ENCODE measurements at regions of chr4 and their contacts with region 1.

Region 1: GRCh38 chr4:109548655-109549054 is 11.4 kb upstream of the MCUB start:
- DNase-seq: peak in 2 of 9 experiments; percentile 22 to 25
- ATAC-seq: peak; percentile 17
- H3K4me3 ChIP-seq: no peak overlapping the region
- H3K4me3 Mint-ChIP-seq: no peak overlapping the region
- H3K27ac ChIP-seq: no peak overlapping the region
- H3K27ac Mint-ChIP-seq: peak overlapping the region; percentile 25
- H3K4me1 ChIP-seq: no peaks in the 10 kb centered on the region
- H3K4me1 Mint-ChIP-seq: peaks cover 20% of the 10 kb centered on the region
- H3K27me3 ChIP-seq: no peaks in the 10 kb centered on the region
- H3K27me3 Mint-ChIP-seq: no peaks in the 10 kb centered on the region
- CTCF ChIP-seq: no peak

Region 2: GRCh38 chr4:109278594-109279031 is 270.0 kb before region 1 on chr4:
- CTCF ChIA-PET with region 1: no interaction called
- POLR2A ChIA-PET with region 1: no interaction called
- intact Hi-C with region 1: no loop called
- DNase-seq: no peak
- ATAC-seq: no peak
- H3K4me3 ChIP-seq: no peak overlapping the region
- H3K4me3 Mint-ChIP-seq: no peak overlapping the region
- H3K27ac ChIP-seq: no peak overlapping the region
- H3K27ac Mint-ChIP-seq: no peak overlapping the region
- H3K4me1 ChIP-seq: no peaks in the 10 kb centered on the region
- H3K4me1 Mint-ChIP-seq: no peaks in the 10 kb centered on the region
- H3K27me3 ChIP-seq: no peaks in the 10 kb centered on the region
- H3K27me3 Mint-ChIP-seq: peaks cover 11% of the 10 kb centered on the region
- CTCF ChIP-seq: no peak

Region 3: DNA sequence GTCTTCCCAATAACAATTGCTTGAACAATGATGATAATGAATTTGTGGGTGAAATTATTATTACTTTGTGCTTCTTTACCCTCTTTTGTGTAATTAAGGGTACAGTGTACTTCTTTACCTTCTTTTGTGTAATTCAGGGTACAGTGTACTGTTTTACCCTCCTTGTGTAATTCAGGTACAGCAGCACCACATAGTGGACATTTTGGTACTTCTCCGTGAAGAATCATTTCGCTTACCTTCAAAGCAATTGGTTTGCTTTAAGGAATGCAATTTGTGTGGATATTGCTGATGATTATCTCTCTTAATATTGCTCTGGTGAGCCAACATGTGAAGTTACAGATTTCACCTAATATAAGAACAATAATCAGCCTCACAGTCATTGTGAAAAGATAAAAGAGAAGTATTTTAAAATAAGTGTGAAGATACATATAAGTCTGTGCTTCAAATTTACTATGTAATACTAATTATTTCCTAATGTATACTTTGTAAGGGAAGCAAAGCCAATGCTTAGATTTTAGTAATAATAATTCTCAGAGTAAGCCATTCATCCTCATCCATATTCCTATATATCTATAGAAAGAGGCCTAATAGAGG is 142.2 kb before region 1 on chr4:
- CTCF ChIA-PET with region 1: no interaction called
- POLR2A ChIA-PET with region 1: no interaction called
- intact Hi-C with region 1: no loop called
- DNase-seq: peak in 4 of 9 experiments; percentile 26 to 73 (median 46)
- ATAC-seq: peak; percentile 57
- H3K4me3 ChIP-seq: no peak overlapping the region
- H3K4me3 Mint-ChIP-seq: no peak overlapping the region
- H3K27ac ChIP-seq: no peak overlapping the region
- H3K27ac Mint-ChIP-seq: no peak overlapping the region
- H3K4me1 ChIP-seq: no peaks in the 10 kb centered on the region
- H3K4me1 Mint-ChIP-seq: no peaks in the 10 kb centered on the region
- H3K27me3 ChIP-seq: no peaks in the 10 kb centered on the region
- H3K27me3 Mint-ChIP-seq: peaks cover 2% of the 10 kb centered on the region
- CTCF ChIP-seq: peak; percentile 72

Region 4: DNA sequence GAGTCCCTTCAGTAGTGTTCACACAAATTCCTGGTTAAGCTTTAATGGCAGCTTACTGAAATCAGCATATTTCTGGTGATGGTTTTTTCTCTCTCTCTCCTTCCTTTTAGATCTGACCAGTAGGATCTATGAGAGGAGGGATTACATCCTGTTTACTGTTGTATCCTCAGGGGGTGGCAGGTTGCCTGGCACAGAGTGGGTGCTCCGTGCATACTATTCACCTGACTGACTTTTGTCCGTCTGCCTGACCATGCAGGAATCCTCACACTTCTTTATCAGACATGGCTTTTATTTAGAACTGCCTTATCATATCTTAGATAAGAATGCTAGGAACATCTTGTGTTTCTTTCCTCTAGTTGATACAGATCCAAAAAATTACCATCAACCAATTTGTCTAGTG is 41.0 kb after region 1 on chr4:
- CTCF ChIA-PET with region 1: no interaction called
- POLR2A ChIA-PET with region 1: interaction called, 9 read pairs
- intact Hi-C with region 1: loop called in 1 of 2 experiments (anchors 5 kb)
- DNase-seq: no peak
- ATAC-seq: no peak
- H3K4me3 ChIP-seq: no peak overlapping the region
- H3K4me3 Mint-ChIP-seq: no peak overlapping the region
- H3K27ac ChIP-seq: no peak overlapping the region
- H3K27ac Mint-ChIP-seq: peak overlapping the region; percentile 58
- H3K4me1 ChIP-seq: peaks cover 36% of the 10 kb centered on the region
- H3K4me1 Mint-ChIP-seq: peaks cover 79% of the 10 kb centered on the region
- H3K27me3 ChIP-seq: no peaks in the 10 kb centered on the region
- H3K27me3 Mint-ChIP-seq: no peaks in the 10 kb centered on the region
- CTCF ChIP-seq: no peak

Measured in CD8-positive, alpha-beta T cell (primary cell).